ENCODE measurements at regions of chr11 and their contacts with region 1.

Region 1: GRCh38 chr11:117037279-117037974 is 60.8 kb downstream of the SIK3 start:
- DNase-seq: peak in 6 of 9 donors; percentile 21 to 51 (median 38)
- ATAC-seq: peak; percentile 48
- H3K4me3 ChIP-seq: no peak overlapping the region
- H3K4me3 Mint-ChIP-seq: peak overlapping the region; percentile 4 to 68 (median 50)
- H3K27ac ChIP-seq: peak overlapping the region; percentile 58
- H3K27ac Mint-ChIP-seq: peak overlapping the region; percentile 34 to 93 (median 85)
- H3K4me1 ChIP-seq: peaks cover 17 to 24% of the 10 kb centered on the region in 2 donors
- H3K4me1 Mint-ChIP-seq: peaks cover 25 to 79% (median 64%) of the 10 kb centered on the region in 7 donors
- H3K27me3 ChIP-seq: no peaks in the 10 kb centered on the region
- H3K27me3 Mint-ChIP-seq: no peaks in the 10 kb centered on the region

Region 2: DNA sequence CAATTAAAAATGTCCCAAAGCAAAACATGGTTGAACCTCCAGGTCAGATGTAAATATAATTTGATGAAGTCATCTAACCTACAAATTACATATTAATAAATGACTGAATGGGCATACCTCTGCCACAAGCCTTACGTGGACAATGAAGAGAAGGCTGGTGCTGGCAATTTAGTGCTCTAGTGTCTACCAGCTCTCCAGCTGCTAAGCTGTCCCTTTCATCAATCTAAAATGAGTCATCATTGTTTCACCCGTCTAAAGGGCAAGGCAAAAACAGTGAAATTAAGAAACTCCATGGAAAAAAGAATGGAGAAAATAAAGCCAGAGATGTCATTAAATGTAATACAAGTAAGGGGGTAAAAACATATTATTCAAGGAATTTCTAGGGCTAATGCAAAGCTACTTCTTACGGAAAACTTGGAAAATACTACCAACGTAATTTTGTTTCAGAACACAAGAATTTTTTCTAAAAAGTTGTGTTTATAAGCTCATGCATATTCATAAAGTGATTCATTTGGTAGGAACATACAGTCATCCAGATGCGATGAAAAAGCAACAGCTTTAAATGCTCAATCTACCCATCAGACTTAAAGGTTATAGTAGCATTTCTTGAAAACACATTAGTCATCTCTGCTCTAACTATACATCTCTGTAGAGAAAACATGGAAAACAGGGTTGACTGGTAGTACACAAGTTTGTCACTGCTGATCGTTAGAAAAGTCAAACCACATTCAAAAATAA is 10.7 kb before region 1 on chr11:
- CTCF ChIA-PET with region 1: no interaction called
- POLR2A ChIA-PET with region 1: interaction called, 5 read pairs
- intact Hi-C with region 1: loop called in 1 of 2 experiments (anchors 2 kb)
- DNase-seq: no peak
- ATAC-seq: peak; percentile 21
- H3K4me3 ChIP-seq: no peak overlapping the region
- H3K4me3 Mint-ChIP-seq: peak overlapping the region in 1 of 10 donors; percentile 19
- H3K27ac ChIP-seq: no peak overlapping the region
- H3K27ac Mint-ChIP-seq: peak overlapping the region in 2 of 9 donors; percentile 50 to 70
- H3K4me1 ChIP-seq: peaks cover 18 to 25% of the 10 kb centered on the region in 2 donors
- H3K4me1 Mint-ChIP-seq: peaks cover 42 to 79% (median 56%) of the 10 kb centered on the region in 7 donors
- H3K27me3 ChIP-seq: no peaks in the 10 kb centered on the region
- H3K27me3 Mint-ChIP-seq: no peaks in the 10 kb centered on the region

Region 3: DNA sequence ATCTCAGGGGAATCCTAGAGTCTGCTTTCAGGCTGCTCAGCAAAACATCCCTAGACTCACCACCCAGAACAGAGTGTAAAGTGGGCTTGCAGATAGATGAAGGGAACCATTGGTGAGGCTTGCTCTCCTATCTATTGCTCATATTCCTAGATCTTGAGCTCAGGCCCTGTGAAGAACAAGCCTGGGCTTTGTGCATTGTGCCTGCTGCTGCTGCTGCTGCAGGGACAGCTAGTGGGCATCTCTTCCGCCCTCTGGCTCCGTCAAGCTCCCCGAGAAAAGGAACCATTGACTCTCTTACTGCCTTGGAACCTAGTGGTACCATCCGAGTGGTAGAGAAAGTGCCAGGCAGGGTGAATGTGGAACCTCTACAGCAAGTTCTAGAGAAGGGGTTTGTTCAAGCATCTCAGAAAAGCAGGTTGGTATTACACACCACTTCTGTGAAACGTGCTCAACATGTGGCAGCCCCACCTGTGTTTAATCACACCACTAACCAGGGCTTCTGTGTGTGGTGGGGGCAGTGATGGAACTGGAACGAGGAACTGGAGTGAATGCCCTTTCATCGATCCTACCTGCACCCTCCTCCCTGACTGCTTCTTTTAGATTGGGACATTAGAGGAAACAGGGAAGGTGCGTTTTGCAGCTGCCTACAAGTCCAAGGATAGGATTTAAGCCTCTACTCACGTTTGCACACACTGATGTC is 258.2 kb after region 1 on chr11:
- CTCF ChIA-PET with region 1: no interaction called
- POLR2A ChIA-PET with region 1: no interaction called
- intact Hi-C with region 1: no loop called
- DNase-seq: no peak
- ATAC-seq: no peak
- H3K4me3 ChIP-seq: no peak overlapping the region
- H3K4me3 Mint-ChIP-seq: no peak overlapping the region
- H3K27ac ChIP-seq: no peak overlapping the region
- H3K27ac Mint-ChIP-seq: no peak overlapping the region
- H3K4me1 ChIP-seq: no peaks in the 10 kb centered on the region
- H3K4me1 Mint-ChIP-seq: peaks cover 0 to 6% (median 0%) of the 10 kb centered on the region in 7 donors
- H3K27me3 ChIP-seq: no peaks in the 10 kb centered on the region
- H3K27me3 Mint-ChIP-seq: peaks cover 0 to under 1% (median 0%) of the 10 kb centered on the region in 5 donors